Breast epithelium (tissue), 4 donors: ENCODE measurements at regions of chr4 and their contacts with region 1.

Region 1: GRCh38 chr4:44071959-44072955 is 376.4 kb downstream of the KCTD8 start:
- DNase-seq: no peak
- H3K4me3 ChIP-seq: no peak overlapping the region
- H3K27ac ChIP-seq: no peak overlapping the region
- H3K4me1 ChIP-seq: no peaks in the 10 kb centered on the region
- H3K27me3 ChIP-seq: no peaks in the 10 kb centered on the region
- CTCF ChIP-seq: no peak
- POLR2A ChIP-seq: no peak

Region 2: GRCh38 chr4:44046491-44046890 is 25.8 kb before region 1 on chr4:
- intact Hi-C with region 1: loop called (anchors 2 kb)
- DNase-seq: no peak
- H3K4me3 ChIP-seq: no peak overlapping the region
- H3K27ac ChIP-seq: no peak overlapping the region
- H3K4me1 ChIP-seq: no peaks in the 10 kb centered on the region
- H3K27me3 ChIP-seq: no peaks in the 10 kb centered on the region
- CTCF ChIP-seq: no peak
- POLR2A ChIP-seq: no peak